Left cardiac atrium (tissue), 4 donors: ENCODE measurements at regions of chr19 and their contacts with region 1.

Region 1: GRCh38 chr19:49301165-49301865 is 23.7 kb downstream of the SLC6A16 start:
- DNase-seq: peak; percentile 80
- ATAC-seq: peak; percentile 87 to 89

Region 2: GRCh38 chr19:49224856-49225255 is 76.5 kb before region 1 on chr19:
- intact Hi-C with region 1: loop called in 1 of 2 experiments (anchors 5 kb)
- DNase-seq: peak; percentile 34
- ATAC-seq: peak; percentile 19 to 70

Region 3: DNA sequence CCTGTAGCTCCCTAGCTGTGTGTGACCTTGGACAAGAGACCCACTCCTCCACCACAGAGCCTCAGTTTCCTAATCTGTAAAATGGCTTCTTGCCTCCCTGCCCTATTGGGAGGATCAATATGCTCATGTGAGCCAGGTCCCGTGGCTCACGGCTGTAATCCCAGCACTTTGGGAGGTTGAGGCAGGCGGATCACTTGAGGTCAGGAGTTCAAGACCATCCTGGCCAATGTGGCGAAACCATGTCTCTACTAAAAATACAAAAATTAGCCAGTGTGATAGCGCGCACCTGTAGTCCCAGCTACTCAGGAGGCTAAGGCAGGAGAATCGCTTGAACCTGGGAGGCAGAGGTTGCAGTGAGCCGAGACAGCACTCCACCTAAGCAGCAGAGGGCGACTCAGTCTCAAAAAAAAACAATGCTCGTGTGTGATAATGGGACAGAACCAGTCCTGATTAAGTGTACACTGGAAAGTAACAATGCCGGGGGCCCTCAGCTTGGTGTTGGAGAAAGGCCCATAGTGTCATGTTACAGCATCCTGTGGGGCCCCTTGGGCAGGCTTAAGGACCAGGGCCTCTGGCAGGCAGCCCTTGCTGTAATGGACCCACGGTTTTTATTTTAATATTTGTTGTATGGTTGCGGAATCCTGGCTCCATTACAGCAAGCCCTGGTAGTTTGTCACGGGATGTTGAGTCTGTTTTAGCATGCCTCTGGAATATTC is 201.7 kb after region 1 on chr19:
- intact Hi-C with region 1: no loop called
- DNase-seq: peak; percentile 42
- ATAC-seq: peak; percentile 28 to 49